ENCODE measurements at regions of chr5 and their contacts with region 1.

Region 1: GRCh38 chr5:32223946-32224608 is 50.0 kb upstream of the GOLPH3 start:
- DNase-seq: no peak
- H3K4me3 ChIP-seq: no peak overlapping the region
- H3K27ac ChIP-seq: peak overlapping the region; percentile 78 to 95 (median 89)
- H3K4me1 ChIP-seq: peaks cover 0 to 54% (median 41%) of the 10 kb centered on the region in 4 donors
- H3K27me3 ChIP-seq: no peaks in the 10 kb centered on the region
- CTCF ChIP-seq: no peak
- EP300 ChIP-seq: peak in 3 of 4 donors; percentile 20 to 63 (median 49)
- POLR2A ChIP-seq: no peak

Region 2: GRCh38 chr5:32174011-32174870 is 49.8 kb before region 1 on chr5 and contains the start of gene GOLPH3:
- intact Hi-C with region 1: loop called (anchors 2 kb)
- DNase-seq: peak; percentile 96
- H3K4me3 ChIP-seq: peak within 1 kb of the TSS; percentile 76 to 98 (median 92)
- H3K27ac ChIP-seq: peak within 1 kb of the TSS; percentile 99 to 100 (median 100)
- H3K4me1 ChIP-seq: peaks cover 0 to 47% (median 36%) of the 10 kb centered on the region in 4 donors
- H3K27me3 ChIP-seq: no peaks in the 10 kb centered on the region
- CTCF ChIP-seq: no peak
- EP300 ChIP-seq: peak in 2 of 4 donors; percentile 12 to 18
- POLR2A ChIP-seq: peak; percentile 94 to 95
- total RNA-seq, gene GOLPH3: 170 to 247 (median 192) TPM

Region 3: GRCh38 chr5:32522429-32523143 is 298.5 kb after region 1 on chr5:
- intact Hi-C with region 1: no loop called
- DNase-seq: no peak
- H3K4me3 ChIP-seq: no peak overlapping the region
- H3K27ac ChIP-seq: no peak overlapping the region
- H3K4me1 ChIP-seq: no peaks in the 10 kb centered on the region
- H3K27me3 ChIP-seq: no peaks in the 10 kb centered on the region
- CTCF ChIP-seq: no peak
- EP300 ChIP-seq: no peak
- POLR2A ChIP-seq: no peak

Measured in sigmoid colon (tissue), 7 donors.